ENCODE measurements at regions of chr16 and their contacts with region 1.

Region 1: GRCh38 chr16:82782715-82783251 is 156.0 kb downstream of the CDH13 start:
- DNase-seq: peak; percentile 77 to 86
- ATAC-seq: peak; percentile 87 to 90
- H3K4me3 ChIP-seq: peak overlapping the region; percentile 15 to 47 (median 35)
- H3K27ac ChIP-seq: peak overlapping the region; percentile 85 to 93 (median 89)
- H3K4me1 ChIP-seq: peaks cover 43 to 54% of the 10 kb centered on the region in 2 donors
- H3K27me3 ChIP-seq: no peaks in the 10 kb centered on the region
- CTCF ChIP-seq: no peak
- POLR2A ChIP-seq: no peak

Region 2: DNA sequence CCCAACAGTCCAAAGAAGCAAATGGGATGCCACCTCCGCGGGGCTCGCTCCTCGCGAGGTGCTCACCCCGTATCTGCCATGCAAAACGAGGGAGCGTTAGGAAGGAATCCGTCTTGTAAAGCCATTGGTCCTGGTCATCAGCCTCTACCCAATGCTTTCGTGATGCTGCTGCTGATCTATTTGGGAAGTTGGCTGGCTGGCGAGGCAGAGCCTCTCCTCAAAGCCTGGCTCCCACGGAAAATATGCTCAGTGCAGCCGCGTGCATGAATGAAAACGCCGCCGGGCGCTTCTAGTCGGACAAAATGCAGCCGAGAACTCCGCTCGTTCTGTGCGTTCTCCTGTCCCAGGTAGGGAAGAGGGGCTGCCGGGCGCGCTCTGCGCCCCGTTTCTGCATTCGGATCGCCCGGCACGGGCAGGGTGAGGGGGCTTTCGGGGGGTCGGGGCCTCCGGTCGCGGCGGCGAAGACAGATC is 156.0 kb before region 1 on chr16 and contains the start of gene CDH13:
- in situ Hi-C with region 1: no loop called
- intact Hi-C with region 1: loop called (anchors 5 kb)
- DNase-seq: peak; percentile 18 to 40
- ATAC-seq: peak; percentile 7 to 16
- H3K4me3 ChIP-seq: peak within 1 kb of the TSS; percentile 58 to 79 (median 62)
- H3K27ac ChIP-seq: peak within 1 kb of the TSS; percentile 86 to 93 (median 88)
- H3K4me1 ChIP-seq: peaks cover 46 to 50% of the 10 kb centered on the region in 2 donors
- H3K27me3 ChIP-seq: no peaks in the 10 kb centered on the region
- CTCF ChIP-seq: no peak
- POLR2A ChIP-seq: peak; percentile 38 to 60
- total RNA-seq, gene CDH13: 5.8 to 36.7 (median 20.4) TPM

Region 3: DNA sequence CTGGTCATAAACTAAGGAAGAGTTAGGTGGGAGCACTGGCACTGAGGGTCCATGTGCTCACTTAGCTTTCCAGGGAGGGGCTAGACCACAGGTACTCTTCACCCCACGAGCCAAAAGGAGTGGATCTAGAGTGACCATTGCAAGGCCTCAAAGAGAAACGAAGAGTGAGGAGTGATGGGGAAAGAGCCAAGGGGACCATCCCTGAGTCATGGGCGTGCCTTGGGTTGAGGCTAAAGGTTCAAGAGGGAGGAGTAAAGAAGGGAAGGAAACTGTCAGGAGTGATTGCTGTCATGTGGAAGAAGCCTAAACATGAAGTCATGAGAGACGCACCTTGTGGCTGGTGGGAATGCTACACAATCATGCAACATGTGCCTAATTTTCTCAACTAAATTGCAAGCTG is 15.0 kb before region 1 on chr16:
- in situ Hi-C with region 1: no loop called
- intact Hi-C with region 1: loop called (anchors 2 kb)
- DNase-seq: no peak
- ATAC-seq: peak in 1 of 2 donors; percentile 11
- H3K4me3 ChIP-seq: peak overlapping the region in 1 of 4 donors; percentile 3
- H3K27ac ChIP-seq: peak overlapping the region in 3 of 4 donors; percentile 38 to 71 (median 54)
- H3K4me1 ChIP-seq: peaks cover 44 to 50% of the 10 kb centered on the region in 2 donors
- H3K27me3 ChIP-seq: no peaks in the 10 kb centered on the region
- CTCF ChIP-seq: no peak
- POLR2A ChIP-seq: no peak

Measured in gastrocnemius medialis (tissue), 4 donors.